ENCODE measurements at regions of chr12 and their contacts with region 1.

Region 1: DNA sequence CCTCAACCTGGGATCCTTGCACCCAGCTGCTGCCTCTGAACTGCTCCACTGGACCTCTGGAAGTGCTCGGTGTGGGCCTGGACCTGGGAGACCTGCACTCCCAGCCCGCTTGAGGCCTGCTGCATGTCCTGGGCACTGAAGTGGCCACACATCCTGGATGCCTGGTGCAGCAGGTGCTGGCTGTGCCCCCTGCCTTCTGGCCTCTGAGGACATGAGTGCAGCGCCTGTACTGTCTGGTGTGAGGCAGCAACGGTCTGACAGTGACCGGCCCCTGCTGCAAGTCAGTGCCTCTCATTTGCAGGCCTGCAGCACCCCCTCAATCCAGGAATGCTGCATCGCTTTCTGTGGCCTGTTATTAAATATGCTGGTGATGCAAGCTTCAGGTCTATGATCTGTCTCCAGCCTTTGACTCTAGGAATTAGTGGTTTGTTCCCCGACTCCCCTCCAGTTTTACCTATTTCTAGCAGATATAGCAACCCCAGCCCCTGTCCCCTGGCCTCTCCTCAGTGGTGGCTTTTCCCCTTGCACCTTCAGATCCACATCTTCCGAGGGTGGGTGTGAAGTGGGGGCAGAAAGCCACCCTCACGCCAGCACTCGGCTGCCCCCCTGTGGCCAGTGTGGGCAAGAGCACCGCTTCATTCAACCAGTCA is 3.6 kb downstream of the SMIM41 start:
- DNase-seq: peak; percentile 68
- H3K4me3 ChIP-seq: no peak overlapping the region
- H3K27ac ChIP-seq: peak overlapping the region; percentile 60 to 77 (median 66)
- H3K4me1 ChIP-seq: peaks cover 11 to 27% (median 14%) of the 10 kb centered on the region in 4 donors
- H3K27me3 ChIP-seq: no peaks in the 10 kb centered on the region
- CTCF ChIP-seq: peak; percentile 94 to 98 (median 95)
- EP300 ChIP-seq: no peak
- POLR2A ChIP-seq: no peak

Region 2: DNA sequence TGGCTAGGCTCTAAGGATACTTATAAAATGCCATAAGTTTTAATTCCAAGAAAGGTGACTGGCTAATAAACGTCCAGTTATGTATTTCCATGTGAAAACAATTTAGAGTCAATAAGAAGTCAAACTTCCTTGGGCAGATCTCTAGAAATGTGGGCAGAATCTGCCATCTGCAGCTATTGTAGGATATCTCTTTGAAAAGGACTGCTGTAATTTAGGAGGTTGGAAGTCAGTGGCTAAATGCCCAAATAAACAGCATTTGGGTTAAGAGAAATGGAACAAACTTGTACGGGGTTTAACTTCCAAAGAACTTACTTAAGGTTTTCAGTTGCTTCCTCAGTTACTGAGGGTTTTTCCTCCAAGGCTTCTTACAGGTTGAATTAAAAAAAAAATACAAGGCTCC is 356.2 kb before region 1 on chr12:
- in situ Hi-C with region 1: no loop called
- intact Hi-C with region 1: no loop called
- DNase-seq: no peak
- H3K4me3 ChIP-seq: no peak overlapping the region
- H3K27ac ChIP-seq: no peak overlapping the region
- H3K4me1 ChIP-seq: no peaks in the 10 kb centered on the region
- H3K27me3 ChIP-seq: peaks cover 13% of the 10 kb centered on the region
- CTCF ChIP-seq: no peak
- EP300 ChIP-seq: no peak
- POLR2A ChIP-seq: no peak

Region 3: DNA sequence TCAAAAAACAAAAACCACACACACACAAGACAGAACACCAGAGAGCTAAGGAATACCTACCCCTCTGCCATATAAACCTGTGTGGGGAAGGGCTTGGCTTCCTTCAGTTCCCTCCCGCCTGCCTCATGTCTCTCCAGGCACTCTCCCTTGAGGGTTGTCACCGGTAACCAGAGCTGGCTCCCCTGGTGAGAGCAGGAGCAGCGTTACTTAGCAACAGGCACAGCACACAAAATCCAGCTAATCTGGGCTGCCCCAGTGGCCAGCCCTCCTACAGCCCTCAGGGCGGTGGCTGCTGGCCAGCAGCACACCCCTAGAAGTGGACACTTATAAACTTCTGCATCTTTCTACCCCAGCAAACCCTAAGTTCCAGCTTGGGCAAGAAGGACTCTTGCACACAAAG is 53.4 kb before region 1 on chr12:
- in situ Hi-C with region 1: loop called in 3 of 4 experiments (anchors 5 to 10 kb)
- intact Hi-C with region 1: loop called (anchors 2 kb)
- DNase-seq: no peak
- H3K4me3 ChIP-seq: no peak overlapping the region
- H3K27ac ChIP-seq: no peak overlapping the region
- H3K4me1 ChIP-seq: peaks cover 26 to 47% (median 37%) of the 10 kb centered on the region in 4 donors
- H3K27me3 ChIP-seq: no peaks in the 10 kb centered on the region
- CTCF ChIP-seq: no peak
- EP300 ChIP-seq: no peak
- POLR2A ChIP-seq: no peak

Measured in transverse colon (tissue), 4 donors.